ENCODE measurements at regions of chrX and their contacts with region 1.

Region 1: DNA sequence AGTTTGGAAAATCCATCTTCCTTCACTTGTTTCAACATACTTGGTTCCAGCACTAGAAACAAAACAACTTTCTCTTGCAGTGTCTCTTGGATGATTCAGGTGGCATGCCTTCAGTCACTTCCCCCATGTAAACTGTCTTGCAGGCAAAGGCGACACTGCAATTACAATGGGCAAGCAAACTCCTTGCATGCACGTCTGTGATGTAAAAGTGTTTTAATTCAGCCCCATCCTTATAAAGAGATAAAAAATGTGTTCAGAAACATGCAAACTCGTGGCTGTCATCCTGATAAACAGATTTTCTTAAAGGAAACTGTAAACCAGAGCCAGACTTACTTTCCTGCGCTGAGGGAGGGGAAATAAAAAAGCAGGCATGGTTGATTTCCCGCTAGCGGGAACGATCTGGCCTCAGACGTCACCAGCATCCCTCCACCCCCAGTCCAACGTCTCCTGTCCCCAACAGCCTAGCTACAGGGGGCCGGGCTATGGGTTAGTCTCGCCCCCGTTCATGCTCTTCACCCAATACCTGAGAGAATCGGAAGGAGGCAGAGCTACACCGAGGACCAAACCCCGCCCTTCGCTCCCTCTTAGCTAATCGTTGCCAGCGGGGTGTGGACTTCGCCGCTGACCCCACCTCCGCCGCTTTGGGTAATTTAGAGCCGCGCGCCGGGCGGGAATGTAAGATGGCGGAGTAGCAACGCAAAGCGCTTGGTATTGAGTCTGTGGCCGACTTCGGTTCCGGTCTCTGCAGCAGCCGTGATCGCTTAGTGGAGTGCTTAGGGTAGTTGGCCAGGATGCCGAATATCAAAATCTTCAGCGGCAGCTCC is at the start of gene PRPS1:
- DNase-seq: peak; percentile 95
- ATAC-seq: peak; percentile 98
- H3K4me3 ChIP-seq: peak within 1 kb of the TSS; percentile 67
- H3K27ac ChIP-seq: peak within 1 kb of the TSS; percentile 48
- H3K4me1 ChIP-seq: no peaks in the 10 kb centered on the region
- H3K27me3 ChIP-seq: no peaks in the 10 kb centered on the region
- CTCF ChIP-seq: no peak
- POLR2A ChIP-seq: peak; percentile 76
- RAD21 ChIP-seq: no peak
- total RNA-seq, gene PRPS1: 137 and 162 TPM in 2 replicates

Region 2: GRCh38 chrX:106999002-106999975 is 628.8 kb before region 1 on chrX:
- CTCF ChIA-PET with region 1: no interaction called
- POLR2A ChIA-PET with region 1: no interaction called
- dilution Hi-C with region 1: no loop called
- in situ Hi-C with region 1: no loop called
- intact Hi-C with region 1: loop called (anchors 10 kb)
- DNase-seq: peak; percentile 49
- ATAC-seq: peak; percentile 71
- H3K4me3 ChIP-seq: peak overlapping the region; percentile 62
- H3K27ac ChIP-seq: peak overlapping the region; percentile 36
- H3K4me1 ChIP-seq: no peaks in the 10 kb centered on the region
- H3K27me3 ChIP-seq: peaks cover 3% of the 10 kb centered on the region; the same call in 1 of the 2 replicates
- CTCF ChIP-seq: peak; percentile 53
- POLR2A ChIP-seq: no peak
- RAD21 ChIP-seq: peak; percentile 56

Region 3: DNA sequence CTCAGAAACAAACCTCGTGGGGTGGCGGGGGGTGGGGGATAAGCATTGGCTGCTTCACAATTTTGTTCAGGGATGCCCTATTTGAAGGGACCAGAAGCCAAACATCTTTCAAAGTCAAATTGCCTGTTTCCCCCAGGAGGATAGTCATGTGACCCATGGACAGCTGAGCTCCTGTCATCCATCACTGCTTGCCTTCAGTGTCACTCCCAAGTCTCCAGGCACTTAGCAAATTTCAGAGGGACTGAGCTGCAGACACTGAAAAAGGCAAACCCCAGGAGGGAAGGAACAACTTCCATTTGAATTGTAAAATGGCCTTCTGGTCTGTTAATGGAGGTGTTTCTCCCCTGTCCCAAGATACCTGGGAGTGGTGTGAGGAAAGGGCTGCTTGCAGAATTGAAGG is 105.1 kb before region 1 on chrX:
- CTCF ChIA-PET with region 1: no interaction called
- POLR2A ChIA-PET with region 1: no interaction called
- dilution Hi-C with region 1: no loop called
- in situ Hi-C with region 1: no loop called
- intact Hi-C with region 1: no loop called
- DNase-seq: no peak
- ATAC-seq: no peak
- H3K4me3 ChIP-seq: no peak overlapping the region
- H3K27ac ChIP-seq: no peak overlapping the region
- H3K4me1 ChIP-seq: no peaks in the 10 kb centered on the region
- H3K27me3 ChIP-seq: peaks cover 44% of the 10 kb centered on the region
- CTCF ChIP-seq: no peak
- POLR2A ChIP-seq: no peak
- RAD21 ChIP-seq: no peak

Region 4: DNA sequence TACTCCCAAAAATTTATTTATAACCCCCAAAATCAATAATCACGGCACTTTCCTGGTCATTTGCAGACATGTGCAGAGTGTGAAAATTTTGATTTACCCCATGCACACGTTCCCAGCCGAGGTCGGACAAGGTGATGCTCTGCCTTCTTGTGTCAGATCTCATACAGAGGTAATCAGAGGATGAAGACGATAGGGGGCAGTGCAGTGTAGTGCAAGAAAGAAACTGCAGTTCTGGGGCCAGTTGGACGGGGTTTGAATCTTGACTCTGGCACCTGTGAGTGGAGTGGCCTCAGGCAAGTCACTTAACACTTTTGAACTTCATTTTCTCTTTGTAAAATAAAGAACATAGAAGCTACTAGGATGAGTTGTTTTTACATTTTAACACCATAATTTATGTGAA is 90.2 kb before region 1 on chrX:
- CTCF ChIA-PET with region 1: interaction called, 5 read pairs
- POLR2A ChIA-PET with region 1: interaction called, 4 read pairs
- dilution Hi-C with region 1: no loop called
- in situ Hi-C with region 1: no loop called
- intact Hi-C with region 1: loop called (anchors 2 kb)
- DNase-seq: peak; percentile 50
- ATAC-seq: peak; percentile 63
- H3K4me3 ChIP-seq: no peak overlapping the region
- H3K27ac ChIP-seq: no peak overlapping the region
- H3K4me1 ChIP-seq: no peaks in the 10 kb centered on the region
- H3K27me3 ChIP-seq: peaks cover 7% of the 10 kb centered on the region
- CTCF ChIP-seq: peak; percentile 59
- POLR2A ChIP-seq: no peak
- RAD21 ChIP-seq: peak; percentile 76

Region 5: DNA sequence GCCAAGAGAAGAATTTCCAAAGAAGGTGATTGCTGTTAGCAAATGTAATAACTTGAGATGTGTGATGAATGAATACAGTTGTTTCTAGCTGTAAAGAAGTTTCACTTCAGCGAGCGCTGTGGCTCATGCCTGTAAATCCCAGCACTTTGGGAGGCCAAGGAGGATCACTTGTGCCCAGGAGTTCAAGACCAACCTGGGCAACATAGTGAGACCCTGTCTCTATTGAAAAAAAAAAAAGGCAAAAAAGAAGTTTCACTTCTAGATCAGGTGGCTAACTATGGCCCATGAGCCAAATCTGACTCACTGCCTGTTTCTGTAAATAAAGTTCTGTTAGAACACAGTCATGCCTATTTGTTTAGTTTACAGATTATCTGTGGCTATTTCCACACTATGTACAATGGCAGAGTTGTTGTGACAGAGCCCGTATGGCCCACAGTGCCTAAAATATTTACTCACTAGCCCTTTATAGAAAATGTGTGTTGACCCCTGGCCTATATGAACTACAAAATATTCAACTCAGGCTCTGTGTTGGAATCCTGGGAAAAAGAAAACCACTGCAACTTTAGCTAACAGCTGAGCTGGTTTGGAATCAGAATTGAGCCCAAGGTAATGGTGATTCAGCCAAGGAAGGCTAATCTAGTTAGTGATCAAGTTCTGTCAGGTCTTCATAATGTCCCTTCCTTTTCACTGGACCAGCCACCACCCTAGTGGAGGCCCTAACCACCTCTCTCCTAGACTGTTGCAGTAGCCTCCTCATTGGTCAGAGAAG is 53.8 kb before region 1 on chrX:
- CTCF ChIA-PET with region 1: no interaction called
- POLR2A ChIA-PET with region 1: no interaction called
- dilution Hi-C with region 1: no loop called
- in situ Hi-C with region 1: no loop called
- intact Hi-C with region 1: loop called (anchors 2 kb)
- DNase-seq: peak; percentile 85
- ATAC-seq: peak; percentile 63
- H3K4me3 ChIP-seq: no peak overlapping the region
- H3K27ac ChIP-seq: peak overlapping the region; percentile 89
- H3K4me1 ChIP-seq: peaks cover 16% of the 10 kb centered on the region
- H3K27me3 ChIP-seq: peaks cover 2% of the 10 kb centered on the region; the same call in 1 of the 2 replicates
- CTCF ChIP-seq: no peak
- POLR2A ChIP-seq: no peak
- RAD21 ChIP-seq: no peak